Heart right ventricle (tissue), 16 donors: ENCODE measurements at regions of chr1 and their contacts with region 1.

Region 1: DNA sequence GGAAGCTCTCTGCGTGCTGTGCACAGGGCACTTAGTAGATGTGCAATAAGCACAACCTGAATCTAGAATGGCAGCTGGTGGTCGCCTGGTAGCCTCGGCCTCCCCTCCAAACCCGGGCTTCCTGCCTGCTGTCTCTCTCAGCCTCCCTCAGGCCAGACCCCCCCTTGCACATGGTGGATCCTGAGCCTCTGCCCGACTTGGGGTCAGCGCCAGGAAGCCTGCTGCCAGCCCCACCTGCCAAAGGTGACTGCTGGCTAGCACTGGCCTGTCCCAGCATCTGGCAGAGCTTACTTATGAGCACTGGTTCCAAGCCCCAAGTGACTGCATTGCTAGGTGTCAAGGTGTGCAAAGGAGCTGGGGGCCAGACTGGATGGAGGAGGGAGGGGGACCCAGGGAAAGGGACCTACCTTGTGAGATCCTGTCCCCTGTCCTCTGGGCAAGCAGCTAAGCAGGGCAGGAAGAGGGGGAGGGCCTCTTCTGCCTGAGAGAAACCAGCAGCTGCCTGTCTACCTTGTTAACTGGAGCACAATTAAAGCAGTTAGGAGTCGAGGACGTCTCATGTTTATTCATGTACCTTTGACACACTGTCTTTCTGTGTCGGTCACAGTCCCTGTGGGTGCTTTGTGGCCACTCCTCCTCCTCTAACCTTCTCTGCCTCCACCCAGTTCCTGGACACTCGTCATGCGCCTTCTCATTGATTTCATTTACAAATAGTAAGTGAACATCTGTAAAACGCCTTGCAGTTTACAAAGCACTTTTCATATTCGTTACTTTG is 100.9 kb downstream of the DDX20 start:
- DNase-seq: no peak
- ATAC-seq: peak in 2 of 8 donors; percentile 10 to 21
- H3K4me3 ChIP-seq: no peak overlapping the region
- H3K27ac ChIP-seq: peak overlapping the region in 2 of 10 donors; percentile 46 to 49
- H3K4me1 ChIP-seq: peaks cover 0 to 12% (median 4%) of the 10 kb centered on the region in 9 donors
- H3K27me3 ChIP-seq: peaks cover 0 to 10% (median 0%) of the 10 kb centered on the region in 7 donors
- CTCF ChIP-seq: no peak

Region 2: GRCh38 chr1:111961016-111961415 is 104.4 kb after region 1 on chr1:
- intact Hi-C with region 1: loop called in 1 of 10 experiments (anchors 10 kb)
- DNase-seq: no peak
- ATAC-seq: peak; percentile 12 to 67 (median 34)
- H3K4me3 ChIP-seq: no peak overlapping the region
- H3K27ac ChIP-seq: peak overlapping the region in 4 of 10 donors; percentile 14 to 31 (median 26)
- H3K4me1 ChIP-seq: peaks cover 0 to 63% (median 33%) of the 10 kb centered on the region in 9 donors
- H3K27me3 ChIP-seq: peaks cover 0 to 7% (median 0%) of the 10 kb centered on the region in 7 donors
- CTCF ChIP-seq: no peak